Endothelial cell of umbilical vein (primary cell): ENCODE measurements at regions of chr2 and their contacts with region 1.

Region 1: GRCh38 chr2:231706731-231707624 is 1.3 kb upstream of the PTMA start:
- DNase-seq: peak; percentile 98
- H3K4me3 ChIP-seq: peak overlapping the region; percentile 23 to 64 (median 52)
- H3K27ac ChIP-seq: peak overlapping the region; percentile 89
- H3K4me1 ChIP-seq: peaks cover 12% of the 10 kb centered on the region
- H3K27me3 ChIP-seq: no peaks in the 10 kb centered on the region
- CTCF ChIP-seq: peak; percentile 97 to 98
- POLR2A ChIP-seq: peak; percentile 50

Region 2: DNA sequence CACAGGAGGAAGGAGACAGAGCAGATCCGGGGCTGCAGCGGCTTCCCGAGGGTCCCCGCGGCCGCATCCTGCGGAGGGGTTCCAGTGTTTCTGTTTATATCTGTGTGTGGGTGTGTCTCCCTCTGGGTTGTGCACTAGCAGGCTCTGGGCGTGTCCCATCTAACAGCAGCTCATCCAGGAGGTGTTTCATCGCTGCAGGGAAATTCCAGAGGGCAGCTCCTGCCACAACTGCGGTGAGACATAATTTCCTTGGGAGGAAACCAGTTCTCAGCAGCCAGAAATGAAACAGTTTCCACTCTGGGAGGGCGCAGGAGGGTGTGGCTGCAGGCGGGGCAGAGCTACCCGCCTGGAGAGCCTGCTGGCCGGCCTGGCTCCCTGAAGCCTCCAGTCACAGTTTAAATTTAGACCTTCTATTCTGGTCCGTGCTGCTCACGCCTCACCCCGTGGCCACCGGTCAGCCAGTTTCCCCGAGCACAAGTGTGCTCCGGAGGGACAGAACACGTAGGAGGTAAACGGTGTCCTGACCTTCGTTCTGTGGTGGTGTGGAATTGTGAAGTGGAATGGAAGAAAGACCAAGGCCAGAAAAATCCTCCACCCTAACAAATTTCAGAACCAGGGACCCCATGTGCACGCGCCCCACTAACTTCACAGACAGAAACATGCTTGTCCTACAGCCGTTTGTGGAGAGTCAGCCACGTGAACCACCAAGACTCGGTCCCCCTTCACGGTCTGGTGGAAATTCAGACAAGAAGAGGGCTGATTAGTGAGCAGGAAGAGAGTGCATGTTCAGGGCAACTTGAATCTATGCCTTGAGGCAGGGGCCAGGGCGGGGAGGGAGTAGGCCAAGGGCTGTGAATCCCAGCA is 64.1 kb before region 1 on chr2:
- CTCF ChIA-PET with region 1: interaction called, 3 read pairs
- POLR2A ChIA-PET with region 1: interaction called, 6 read pairs
- dilution Hi-C with region 1: no loop called
- intact Hi-C with region 1: loop called (anchors 1 kb)
- DNase-seq: peak; percentile 94
- H3K4me3 ChIP-seq: peak overlapping the region in 2 of 3 experiments; percentile 6 to 19
- H3K27ac ChIP-seq: peak overlapping the region; percentile 77
- H3K4me1 ChIP-seq: peaks cover 16% of the 10 kb centered on the region
- H3K27me3 ChIP-seq: no peaks in the 10 kb centered on the region
- CTCF ChIP-seq: no peak
- POLR2A ChIP-seq: no peak

Region 3: GRCh38 chr2:231662028-231662810 is 44.8 kb before region 1 on chr2:
- CTCF ChIA-PET with region 1: interaction called, 4 read pairs
- POLR2A ChIA-PET with region 1: interaction called, 9 read pairs
- dilution Hi-C with region 1: no loop called
- intact Hi-C with region 1: loop called (anchors 1 kb)
- DNase-seq: peak; percentile 97
- H3K4me3 ChIP-seq: peak overlapping the region in 2 of 3 experiments; percentile 25 to 32
- H3K27ac ChIP-seq: peak overlapping the region; percentile 57
- H3K4me1 ChIP-seq: peaks cover 23% of the 10 kb centered on the region
- H3K27me3 ChIP-seq: no peaks in the 10 kb centered on the region
- CTCF ChIP-seq: no peak
- POLR2A ChIP-seq: peak; percentile 85

Region 4: GRCh38 chr2:231680992-231681853 is 25.8 kb before region 1 on chr2:
- CTCF ChIA-PET with region 1: interaction called, 583 read pairs
- POLR2A ChIA-PET with region 1: interaction called, 4 read pairs
- dilution Hi-C with region 1: no loop called
- intact Hi-C with region 1: loop called (anchors 1 kb)
- DNase-seq: peak; percentile 67
- H3K4me3 ChIP-seq: peak overlapping the region in 2 of 3 experiments; percentile 40 to 43
- H3K27ac ChIP-seq: peak overlapping the region; percentile 66
- H3K4me1 ChIP-seq: peaks cover 4% of the 10 kb centered on the region
- H3K27me3 ChIP-seq: no peaks in the 10 kb centered on the region
- CTCF ChIP-seq: no peak
- POLR2A ChIP-seq: peak; percentile 78

Region 5: GRCh38 chr2:231687133-231687852 is 19.7 kb before region 1 on chr2:
- CTCF ChIA-PET with region 1: interaction called, 10 read pairs
- POLR2A ChIA-PET with region 1: interaction called, 3 read pairs
- dilution Hi-C with region 1: no loop called
- intact Hi-C with region 1: no loop called
- DNase-seq: peak; percentile 54
- H3K4me3 ChIP-seq: no peak overlapping the region
- H3K27ac ChIP-seq: no peak overlapping the region
- H3K4me1 ChIP-seq: no peaks in the 10 kb centered on the region
- H3K27me3 ChIP-seq: no peaks in the 10 kb centered on the region
- CTCF ChIP-seq: peak; percentile 60 to 82
- POLR2A ChIP-seq: no peak

Region 6: GRCh38 chr2:231780909-231781797 is 74.2 kb after region 1 on chr2 and contains the start of gene PDE6D:
- CTCF ChIA-PET with region 1: no interaction called
- POLR2A ChIA-PET with region 1: interaction called, 3 read pairs
- dilution Hi-C with region 1: no loop called
- intact Hi-C with region 1: loop called (anchors 1 kb)
- DNase-seq: peak; percentile 99
- H3K4me3 ChIP-seq: peak within 1 kb of the TSS; percentile 50 to 86 (median 85)
- H3K27ac ChIP-seq: peak within 1 kb of the TSS; percentile 68
- H3K4me1 ChIP-seq: peaks cover 24% of the 10 kb centered on the region
- H3K27me3 ChIP-seq: no peaks in the 10 kb centered on the region
- CTCF ChIP-seq: no peak
- POLR2A ChIP-seq: peak; percentile 67
- total RNA-seq, gene PDE6D: 23.8 and 24.3 TPM in 2 replicates